Transverse colon (tissue), 4 donors: ENCODE measurements at regions of chr12 and their contacts with region 1.

Region 1: DNA sequence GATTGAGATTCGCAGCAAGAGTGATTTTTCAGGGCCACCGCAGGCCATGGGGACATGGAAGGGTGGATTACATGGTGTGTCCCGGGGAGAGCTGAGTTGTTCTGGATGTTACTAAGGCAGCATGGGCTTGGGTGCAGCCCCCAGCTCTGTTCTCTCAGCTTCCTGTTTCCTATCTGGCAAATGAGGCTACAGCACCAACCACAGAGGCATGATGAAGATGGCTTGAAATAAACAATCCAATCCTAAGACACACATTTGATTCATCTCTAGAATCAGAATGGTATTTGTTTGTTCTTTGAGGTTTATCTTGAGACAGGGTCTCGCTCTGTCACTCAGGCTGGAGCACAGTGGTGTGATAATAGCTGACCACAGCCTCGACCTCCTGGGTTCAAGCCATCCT is 21.6 kb downstream of the GLTP start:
- DNase-seq: no peak
- H3K4me3 ChIP-seq: no peak overlapping the region
- H3K27ac ChIP-seq: no peak overlapping the region
- H3K4me1 ChIP-seq: peaks cover 2 to 27% (median 12%) of the 10 kb centered on the region in 4 donors
- H3K27me3 ChIP-seq: no peaks in the 10 kb centered on the region
- CTCF ChIP-seq: no peak
- EP300 ChIP-seq: no peak
- POLR2A ChIP-seq: no peak

Region 2: DNA sequence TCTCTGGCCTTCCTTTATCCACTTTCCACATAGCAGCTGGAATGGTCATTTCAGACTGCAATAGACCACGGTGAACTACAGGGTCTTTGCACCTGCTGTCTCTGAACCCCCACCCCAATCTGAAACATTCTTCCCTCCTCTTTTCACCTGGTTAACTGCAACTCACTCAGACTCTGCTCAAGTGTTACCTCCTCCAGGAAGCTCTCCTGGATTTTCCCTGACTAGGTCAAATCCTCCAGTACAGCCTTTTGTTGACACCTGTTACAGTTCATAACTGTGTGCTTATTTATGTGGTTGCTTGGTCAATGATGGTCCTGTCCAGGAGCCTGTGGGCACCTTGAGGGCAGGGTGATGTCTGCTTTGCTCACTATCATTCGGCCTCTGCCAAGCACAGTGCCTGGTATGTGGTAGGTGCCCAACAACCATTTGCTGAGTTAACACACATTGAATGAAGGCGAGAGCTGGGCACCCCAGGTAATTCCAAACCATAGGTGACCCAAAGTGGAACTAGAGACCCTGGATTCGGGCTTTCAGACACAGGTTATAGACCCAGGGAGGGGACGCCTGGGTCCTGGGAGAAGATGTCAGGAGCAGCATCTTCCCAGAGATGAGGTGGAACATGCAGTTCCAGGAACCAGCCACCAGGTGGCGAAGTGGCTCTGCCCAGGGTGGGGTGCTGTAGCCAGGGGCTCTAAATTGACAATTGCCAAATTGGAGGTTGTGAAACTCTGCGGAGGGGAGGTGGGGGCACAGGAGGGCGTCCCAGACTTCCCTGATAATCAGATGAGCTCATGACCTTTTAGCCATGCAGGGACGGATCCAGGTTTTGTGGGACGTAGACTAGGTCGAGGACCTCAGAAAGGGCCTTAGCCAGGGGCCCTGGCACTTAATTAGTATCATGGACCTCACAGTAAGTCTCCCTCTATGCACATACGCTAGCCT is 53.7 kb before region 1 on chr12:
- in situ Hi-C with region 1: no loop called
- intact Hi-C with region 1: no loop called
- DNase-seq: peak; percentile 72
- H3K4me3 ChIP-seq: no peak overlapping the region
- H3K27ac ChIP-seq: no peak overlapping the region
- H3K4me1 ChIP-seq: no peaks in the 10 kb centered on the region
- H3K27me3 ChIP-seq: no peaks in the 10 kb centered on the region
- CTCF ChIP-seq: peak; percentile 92 to 98 (median 98)
- EP300 ChIP-seq: no peak
- POLR2A ChIP-seq: no peak

Region 3: DNA sequence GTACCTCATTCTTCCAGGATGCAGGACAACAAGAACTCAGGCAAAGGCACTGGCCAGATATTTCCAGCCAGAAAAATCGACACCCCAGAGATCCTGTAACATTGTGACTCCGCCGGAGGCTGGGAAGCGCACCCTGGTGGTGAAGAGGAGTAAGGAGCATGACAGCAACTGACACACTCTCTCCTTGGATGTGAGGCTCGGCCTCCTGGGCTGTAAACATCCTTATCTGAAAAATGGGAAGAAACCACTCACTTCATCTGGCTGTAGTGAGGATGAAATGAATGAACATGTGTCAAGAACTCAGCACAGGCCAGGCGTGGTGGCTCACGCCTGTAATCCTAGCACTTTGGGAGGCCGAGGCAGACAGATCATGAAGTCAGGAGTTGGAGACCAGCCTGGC is 68.9 kb after region 1 on chr12:
- in situ Hi-C with region 1: loop called in 1 of 4 experiments (anchors 10 kb)
- intact Hi-C with region 1: no loop called
- DNase-seq: peak; percentile 47
- H3K4me3 ChIP-seq: no peak overlapping the region
- H3K27ac ChIP-seq: no peak overlapping the region
- H3K4me1 ChIP-seq: peaks cover 0 to 9% (median 3%) of the 10 kb centered on the region in 4 donors
- H3K27me3 ChIP-seq: no peaks in the 10 kb centered on the region
- CTCF ChIP-seq: peak; percentile 46 to 66 (median 63)
- EP300 ChIP-seq: no peak
- POLR2A ChIP-seq: no peak